ENCODE measurements at regions of chr2 and their contacts with region 1.

Region 1: GRCh38 chr2:138827426-138828054 is 47.4 kb upstream of the NXPH2 start:
- DNase-seq: peak; percentile 74
- ATAC-seq: peak; percentile 81
- H3K4me3 ChIP-seq: no peak overlapping the region
- H3K27ac ChIP-seq: no peak overlapping the region
- H3K4me1 ChIP-seq: no peaks in the 10 kb centered on the region
- H3K27me3 ChIP-seq: no peaks in the 10 kb centered on the region
- CTCF ChIP-seq: peak; percentile 83
- EP300 ChIP-seq: no peak
- POLR2A ChIP-seq: no peak
- RAD21 ChIP-seq: peak; percentile 68

Region 2: DNA sequence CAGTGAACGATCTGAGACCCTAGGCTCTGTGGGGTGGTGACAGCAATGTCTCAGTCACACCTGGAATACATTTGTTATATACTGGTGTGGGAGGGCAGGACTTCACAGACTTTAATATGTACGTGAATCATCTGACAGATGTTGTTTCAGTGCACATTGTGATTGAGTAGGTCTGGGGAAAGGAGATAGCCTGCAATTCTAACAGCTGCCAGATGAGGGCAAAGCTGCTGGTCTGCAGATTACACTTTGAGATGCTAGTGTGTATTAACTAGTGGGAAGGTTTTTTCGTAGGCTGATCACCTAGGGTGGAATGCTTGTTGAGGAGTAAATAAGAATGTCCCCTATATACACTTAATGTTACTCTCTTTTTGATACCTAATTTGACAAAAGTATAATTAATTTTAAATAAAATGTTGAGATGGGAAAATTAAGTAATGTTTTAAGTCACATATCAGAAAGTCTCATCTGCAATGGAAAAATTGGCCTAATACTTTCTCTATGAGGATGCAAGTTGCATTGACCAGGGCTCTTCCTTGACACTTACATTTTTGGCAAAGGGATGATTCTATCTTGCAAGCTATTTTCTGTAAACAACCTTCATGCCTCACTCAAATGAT is 1360.2 kb before region 1 on chr2:
- CTCF ChIA-PET with region 1: no interaction called
- POLR2A ChIA-PET with region 1: no interaction called
- in situ Hi-C with region 1: no loop called
- intact Hi-C with region 1: loop called (anchors 1 kb)
- DNase-seq: peak; percentile 23
- ATAC-seq: peak; percentile 98
- H3K4me3 ChIP-seq: no peak overlapping the region
- H3K27ac ChIP-seq: no peak overlapping the region
- H3K4me1 ChIP-seq: no peaks in the 10 kb centered on the region
- H3K27me3 ChIP-seq: no peaks in the 10 kb centered on the region
- CTCF ChIP-seq: peak; percentile 75
- EP300 ChIP-seq: no peak
- POLR2A ChIP-seq: no peak
- RAD21 ChIP-seq: peak; percentile 37; the same call in 1 of the 2 replicates

Region 3: GRCh38 chr2:137888845-137889244 is 938.7 kb before region 1 on chr2:
- CTCF ChIA-PET with region 1: interaction called, 9 read pairs
- POLR2A ChIA-PET with region 1: no interaction called
- in situ Hi-C with region 1: loop called (anchors 5 kb)
- intact Hi-C with region 1: loop called (anchors 1 kb)
- DNase-seq: peak; percentile 63
- ATAC-seq: peak; percentile 89
- H3K4me3 ChIP-seq: no peak overlapping the region
- H3K27ac ChIP-seq: no peak overlapping the region
- H3K4me1 ChIP-seq: peaks cover 23% of the 10 kb centered on the region
- H3K27me3 ChIP-seq: peaks cover 0 to 4% of the 10 kb centered on the region in 2 experiments; a peak in 1 of 5 replicates
- CTCF ChIP-seq: peak; percentile 96
- EP300 ChIP-seq: no peak
- POLR2A ChIP-seq: no peak
- RAD21 ChIP-seq: peak; percentile 77

Region 4: GRCh38 chr2:138010890-138011289 is 816.6 kb before region 1 on chr2:
- CTCF ChIA-PET with region 1: no interaction called
- POLR2A ChIA-PET with region 1: no interaction called
- in situ Hi-C with region 1: no loop called
- intact Hi-C with region 1: loop called (anchors 5 kb)
- DNase-seq: no peak
- ATAC-seq: no peak
- H3K4me3 ChIP-seq: no peak overlapping the region
- H3K27ac ChIP-seq: no peak overlapping the region
- H3K4me1 ChIP-seq: no peaks in the 10 kb centered on the region
- H3K27me3 ChIP-seq: no peaks in the 10 kb centered on the region
- CTCF ChIP-seq: no peak
- EP300 ChIP-seq: no peak
- POLR2A ChIP-seq: 0 out of 4 replicates have a peak, but pooled peaks of 1 of the 2 experiments have one; percentile 10
- RAD21 ChIP-seq: no peak

Region 5: GRCh38 chr2:138275881-138276280 is 551.7 kb before region 1 on chr2:
- CTCF ChIA-PET with region 1: no interaction called
- POLR2A ChIA-PET with region 1: no interaction called
- in situ Hi-C with region 1: no loop called
- intact Hi-C with region 1: loop called (anchors 5 kb)
- DNase-seq: peak; percentile 88
- ATAC-seq: peak; percentile 87
- H3K4me3 ChIP-seq: peak overlapping the region in 2 of 3 experiments; percentile 23 to 43; a peak in 3 of 6 replicates
- H3K27ac ChIP-seq: peak overlapping the region; percentile 53
- H3K4me1 ChIP-seq: peaks cover 70% of the 10 kb centered on the region
- H3K27me3 ChIP-seq: no peaks in the 10 kb centered on the region
- CTCF ChIP-seq: no peak
- EP300 ChIP-seq: peak in 1 of 2 experiments; percentile 67; a peak in 2 of 4 replicates
- POLR2A ChIP-seq: no peak
- RAD21 ChIP-seq: no peak

Measured in HepG2 (cell line).